ENCODE measurements at regions of chr10 and their contacts with region 1.

Region 1: DNA sequence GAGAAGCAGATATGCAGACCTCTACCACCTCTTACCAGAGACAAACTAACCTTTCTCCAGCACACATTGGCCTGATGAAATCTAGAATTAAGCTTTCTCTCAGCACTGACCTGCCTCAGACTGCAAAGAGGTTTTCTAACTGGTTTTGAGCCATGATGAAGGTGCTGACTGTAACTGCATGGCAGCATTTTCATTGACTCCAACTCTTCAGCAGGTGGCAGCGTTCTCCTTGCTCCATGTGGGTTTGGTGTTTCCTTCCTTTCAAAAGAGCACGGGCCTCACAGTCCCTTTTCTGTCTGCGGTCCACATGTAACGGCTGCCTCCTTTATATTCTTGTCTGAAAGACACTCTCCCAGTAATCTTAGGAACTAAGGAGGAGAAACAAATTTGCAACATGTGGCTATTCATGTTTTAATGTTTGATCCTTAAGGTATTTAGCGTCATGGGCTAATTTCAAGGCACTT is 12.6 kb downstream of the KLLN start:
- DNase-seq: peak; percentile 81
- H3K4me3 ChIP-seq: no peak overlapping the region
- H3K27ac ChIP-seq: no peak overlapping the region
- H3K4me1 ChIP-seq: peaks cover 4% of the 10 kb centered on the region
- CTCF ChIP-seq: peak; percentile 88

Region 2: DNA sequence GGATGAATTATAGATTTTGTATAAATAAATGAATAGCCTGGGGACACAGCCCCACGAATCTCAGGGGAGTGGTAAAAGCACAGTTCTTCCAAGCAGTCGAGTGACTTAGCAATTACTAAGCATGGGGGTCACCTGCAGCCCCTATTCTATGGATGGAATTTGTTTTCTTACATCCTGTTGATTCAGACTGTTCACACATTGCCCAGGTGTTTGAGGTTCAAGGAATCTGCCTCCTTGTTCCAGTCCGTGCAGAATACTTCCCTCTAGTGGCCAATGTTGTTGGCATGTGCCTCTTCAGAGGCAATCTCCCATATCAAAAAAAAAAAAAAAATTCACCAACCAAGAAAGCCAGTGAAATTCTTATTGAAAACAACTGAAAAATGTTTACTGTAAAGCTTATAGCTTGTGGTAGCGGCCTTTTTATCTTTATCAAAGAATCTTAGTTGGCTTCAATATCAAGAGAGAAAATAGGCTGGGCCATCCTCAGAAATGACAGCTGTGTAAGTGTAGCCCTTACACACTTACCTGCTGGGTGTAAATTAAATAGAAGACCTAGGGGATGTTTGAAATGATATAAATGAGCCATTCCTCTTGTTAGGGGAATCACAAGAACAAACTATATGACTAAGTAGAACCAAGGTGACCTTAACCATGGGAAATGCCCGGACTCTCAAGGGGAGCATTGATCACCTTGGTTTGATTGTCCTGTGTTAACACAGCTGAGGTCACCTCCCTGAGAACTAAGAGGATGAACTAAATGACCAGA is 959.6 kb after region 1 on chr10:
- CTCF ChIA-PET with region 1: no interaction called
- POLR2A ChIA-PET with region 1: no interaction called
- intact Hi-C with region 1: loop called (anchors 10 kb)
- DNase-seq: peak; percentile 60
- H3K4me3 ChIP-seq: no peak overlapping the region
- H3K27ac ChIP-seq: no peak overlapping the region
- H3K4me1 ChIP-seq: no peaks in the 10 kb centered on the region
- CTCF ChIP-seq: peak; percentile 90